ENCODE measurements at regions of chr17 and their contacts with region 1.

Region 1: GRCh38 chr17:44199553-44200477 is at the start of gene ATXN7L3:
- DNase-seq: peak; percentile 87
- ATAC-seq: peak; percentile 89
- H3K4me3 ChIP-seq: peak within 1 kb of the TSS; percentile 100
- H3K27ac ChIP-seq: peak within 1 kb of the TSS; percentile 98
- H3K4me1 ChIP-seq: peaks cover 16% of the 10 kb centered on the region
- H3K27me3 ChIP-seq: no peaks in the 10 kb centered on the region
- CTCF ChIP-seq: no peak
- EP300 ChIP-seq: 0 out of 4 replicates have a peak, but pooled peaks of 1 of the 2 experiments have one; percentile 39
- POLR2A ChIP-seq: peak; percentile 33; the same call in 1 of the 2 replicates
- RAD21 ChIP-seq: no peak
- polyA plus RNA-seq, gene ATXN7L3: 0.71 to 2.3 TPM

Region 2: GRCh38 chr17:44186307-44187130 is 13.3 kb before region 1 on chr17 and contains the start of gene TMUB2:
- CTCF ChIA-PET with region 1: interaction called, 7 read pairs
- POLR2A ChIA-PET with region 1: interaction called, 12 read pairs
- RAD21 ChIA-PET with region 1: interaction called, 10 read pairs
- SMC1A ChIA-PET with region 1: interaction called, 4 read pairs
- in situ Hi-C with region 1: no loop called
- intact Hi-C with region 1: no loop called
- DNase-seq: peak; percentile 98
- ATAC-seq: peak; percentile 88
- H3K4me3 ChIP-seq: peak within 1 kb of the TSS; percentile 97
- H3K27ac ChIP-seq: peak within 1 kb of the TSS; percentile 97
- H3K4me1 ChIP-seq: peaks cover 4% of the 10 kb centered on the region
- H3K27me3 ChIP-seq: no peaks in the 10 kb centered on the region
- CTCF ChIP-seq: no peak
- EP300 ChIP-seq: no peak
- POLR2A ChIP-seq: peak; percentile 94
- RAD21 ChIP-seq: no peak
- polyA plus RNA-seq, gene TMUB2: 4.3 to 5.9 TPM

Region 3: GRCh38 chr17:44218344-44219107 is 18.7 kb after region 1 on chr17:
- CTCF ChIA-PET with region 1: interaction called, 43 read pairs
- POLR2A ChIA-PET with region 1: interaction called, 30 read pairs
- RAD21 ChIA-PET with region 1: interaction called, 6 read pairs
- SMC1A ChIA-PET with region 1: interaction called, 13 read pairs
- in situ Hi-C with region 1: no loop called
- intact Hi-C with region 1: no loop called
- DNase-seq: no peak
- ATAC-seq: peak; percentile 45
- H3K4me3 ChIP-seq: peak overlapping the region; percentile 82
- H3K27ac ChIP-seq: peak overlapping the region; percentile 91
- H3K4me1 ChIP-seq: peaks cover 20% of the 10 kb centered on the region
- H3K27me3 ChIP-seq: no peaks in the 10 kb centered on the region
- CTCF ChIP-seq: peak; percentile 45 to 66 (median 52); a peak in 5 of 6 replicates
- EP300 ChIP-seq: no peak
- POLR2A ChIP-seq: no peak; the same call in 1 of the 2 replicates
- RAD21 ChIP-seq: peak; percentile 25; the same call in 1 of the 2 replicates

Region 4: DNA sequence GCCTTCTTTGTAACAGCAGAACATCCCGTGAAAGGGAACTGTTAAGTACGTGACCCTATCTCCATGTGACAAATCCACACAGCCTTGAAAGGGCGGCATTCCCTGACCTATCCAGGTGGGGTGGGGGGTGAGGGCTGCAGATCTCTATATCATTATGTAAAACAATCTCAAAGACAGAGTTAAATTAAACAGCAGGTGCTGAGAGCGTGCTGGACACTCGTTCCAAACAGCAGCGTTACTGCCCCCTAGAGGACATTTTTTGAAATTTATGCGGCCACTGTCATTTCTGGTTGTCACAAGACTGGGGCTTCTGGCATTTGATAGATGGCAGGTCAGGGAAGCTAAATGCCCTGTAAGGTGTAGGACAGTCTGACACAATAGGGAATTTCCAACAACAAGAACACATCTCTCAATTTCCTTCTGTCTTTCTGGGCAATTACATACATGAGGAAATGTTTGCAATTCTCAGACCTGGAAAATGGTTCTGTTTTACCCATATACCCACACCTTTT is 131.5 kb after region 1 on chr17:
- CTCF ChIA-PET with region 1: interaction called, 16 read pairs
- POLR2A ChIA-PET with region 1: interaction called, 5 read pairs
- RAD21 ChIA-PET with region 1: interaction called, 5 read pairs
- SMC1A ChIA-PET with region 1: interaction called, 15 read pairs
- in situ Hi-C with region 1: loop called (anchors 5 kb)
- intact Hi-C with region 1: no loop called
- DNase-seq: no peak
- ATAC-seq: peak; percentile 72
- H3K4me3 ChIP-seq: no peak overlapping the region
- H3K27ac ChIP-seq: no peak overlapping the region
- H3K4me1 ChIP-seq: peaks cover 14% of the 10 kb centered on the region
- H3K27me3 ChIP-seq: no peaks in the 10 kb centered on the region
- CTCF ChIP-seq: peak; percentile 69 to 85 (median 84)
- EP300 ChIP-seq: no peak
- POLR2A ChIP-seq: no peak
- RAD21 ChIP-seq: peak; percentile 83

Region 5: DNA sequence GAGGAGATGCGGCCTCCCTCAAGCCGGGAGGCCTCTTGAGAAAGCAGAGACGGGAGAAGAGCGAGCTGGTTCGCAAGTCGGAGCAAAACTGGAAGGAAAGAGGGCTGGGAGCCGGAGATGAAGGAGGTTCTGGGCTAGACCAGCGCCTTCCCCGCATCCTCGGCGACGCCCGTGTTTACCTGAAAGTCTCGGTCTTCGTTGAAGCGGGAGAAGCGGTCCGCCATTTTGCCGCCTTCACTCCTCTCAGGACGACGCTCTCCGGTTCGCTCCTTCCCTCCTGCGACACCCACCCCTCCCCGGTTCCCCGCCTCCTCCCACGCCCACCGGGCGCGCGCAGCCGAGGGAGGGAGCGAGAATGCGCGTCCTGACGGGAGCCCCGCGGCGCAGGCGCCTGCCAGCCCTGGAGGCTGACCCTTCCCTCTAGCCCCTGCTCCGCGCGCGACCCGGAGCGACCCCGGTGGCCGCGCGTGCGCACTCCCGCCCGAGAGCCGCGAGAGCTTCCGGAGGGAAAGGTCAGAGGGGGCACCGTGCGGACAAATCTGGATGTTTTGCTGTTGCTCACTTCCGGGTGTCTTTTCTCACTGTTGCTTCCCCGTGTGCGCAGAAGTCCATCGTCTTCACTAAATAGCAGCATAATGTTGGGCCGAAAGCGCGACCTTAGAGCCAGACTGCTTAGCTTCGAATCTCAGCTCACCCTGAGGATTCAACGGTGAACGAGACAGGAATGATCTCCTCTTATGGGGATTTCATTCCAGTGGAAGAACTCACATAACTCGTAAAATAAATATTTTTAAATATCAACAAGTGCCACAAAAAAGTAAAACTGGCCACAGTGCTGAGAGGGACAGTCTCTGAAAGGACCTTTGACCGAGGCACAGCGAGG is 303.6 kb after region 1 on chr17 and contains the start of gene GPATCH8:
- CTCF ChIA-PET with region 1: no interaction called
- POLR2A ChIA-PET with region 1: no interaction called
- RAD21 ChIA-PET with region 1: no interaction called
- SMC1A ChIA-PET with region 1: no interaction called
- in situ Hi-C with region 1: loop called (anchors 25 kb)
- intact Hi-C with region 1: no loop called
- DNase-seq: peak; percentile 91
- ATAC-seq: peak; percentile 96
- H3K4me3 ChIP-seq: peak within 1 kb of the TSS; percentile 99
- H3K27ac ChIP-seq: peak within 1 kb of the TSS; percentile 91
- H3K4me1 ChIP-seq: peaks cover 5% of the 10 kb centered on the region
- H3K27me3 ChIP-seq: no peaks in the 10 kb centered on the region
- CTCF ChIP-seq: no peak
- EP300 ChIP-seq: no peak
- POLR2A ChIP-seq: peak; percentile 86
- RAD21 ChIP-seq: no peak
- polyA plus RNA-seq, gene GPATCH8: 11.7 to 18.2 TPM

Measured in GM12878 (cell line).